ENCODE measurements at regions of chr13 and their contacts with region 1.

Region 1: GRCh38 chr13:106536244-106537034 is 977 bp upstream of the EFNB2 start:
- DNase-seq: peak; percentile 81 to 95
- H3K4me3 ChIP-seq: peak overlapping the region; percentile 36
- H3K4me1 ChIP-seq: peaks cover 8% of the 10 kb centered on the region
- H3K27me3 ChIP-seq: no peaks in the 10 kb centered on the region

Region 2: DNA sequence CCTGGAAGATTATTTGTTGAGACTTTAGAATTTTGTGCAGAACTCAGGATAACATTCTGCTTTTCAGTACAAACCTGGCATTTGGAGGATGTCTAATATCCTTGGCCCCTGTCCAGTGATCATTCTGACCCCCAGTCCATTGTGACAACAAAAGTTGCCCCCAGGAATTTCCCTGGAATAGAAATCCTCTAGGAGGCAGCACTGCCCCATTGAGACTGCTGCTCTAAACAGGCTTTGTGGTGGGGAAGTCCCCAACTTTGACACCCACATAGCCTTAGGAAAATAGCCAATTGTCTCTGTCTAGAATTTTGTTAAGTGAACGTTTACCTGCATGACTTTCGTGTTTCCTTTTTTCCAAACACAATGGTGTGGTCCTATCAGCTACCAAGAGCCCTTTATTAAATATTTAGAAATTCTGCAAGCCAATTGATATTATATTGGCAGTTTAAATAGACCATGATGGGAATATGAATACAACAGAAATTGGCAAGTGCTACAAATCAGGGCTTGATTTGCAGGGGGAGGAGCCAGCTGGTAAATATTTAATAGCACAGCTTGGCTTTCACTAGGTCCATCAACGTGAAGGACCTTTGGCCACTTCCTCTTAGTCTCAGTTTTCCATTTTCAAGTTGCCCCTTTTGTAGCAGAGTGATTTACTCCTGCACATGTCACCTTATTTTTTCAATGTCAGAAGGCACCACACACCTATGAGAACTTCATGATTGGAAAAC is 452.7 kb before region 1 on chr13:
- in situ Hi-C with region 1: loop called (anchors 25 kb)
- DNase-seq: peak in 1 of 2 experiments; percentile 48
- H3K4me3 ChIP-seq: no peak overlapping the region
- H3K4me1 ChIP-seq: peaks cover 10% of the 10 kb centered on the region
- H3K27me3 ChIP-seq: no peaks in the 10 kb centered on the region

Measured in HAP-1 (cell line).